PC-9 (cell line): ENCODE measurements at regions of chr1 and their contacts with region 1.

Region 1: GRCh38 chr1:197915862-197916499 is 1.2 kb upstream of the LHX9 start:
- DNase-seq: peak; percentile 63 to 64
- H3K4me3 ChIP-seq: peak overlapping the region; percentile 78
- H3K27ac ChIP-seq: no peak overlapping the region
- H3K4me1 ChIP-seq: peaks cover 14% of the 10 kb centered on the region
- H3K27me3 ChIP-seq: peaks cover 13% of the 10 kb centered on the region; the same call in 1 of the 2 replicates
- CTCF ChIP-seq: peak; percentile 76

Region 2: DNA sequence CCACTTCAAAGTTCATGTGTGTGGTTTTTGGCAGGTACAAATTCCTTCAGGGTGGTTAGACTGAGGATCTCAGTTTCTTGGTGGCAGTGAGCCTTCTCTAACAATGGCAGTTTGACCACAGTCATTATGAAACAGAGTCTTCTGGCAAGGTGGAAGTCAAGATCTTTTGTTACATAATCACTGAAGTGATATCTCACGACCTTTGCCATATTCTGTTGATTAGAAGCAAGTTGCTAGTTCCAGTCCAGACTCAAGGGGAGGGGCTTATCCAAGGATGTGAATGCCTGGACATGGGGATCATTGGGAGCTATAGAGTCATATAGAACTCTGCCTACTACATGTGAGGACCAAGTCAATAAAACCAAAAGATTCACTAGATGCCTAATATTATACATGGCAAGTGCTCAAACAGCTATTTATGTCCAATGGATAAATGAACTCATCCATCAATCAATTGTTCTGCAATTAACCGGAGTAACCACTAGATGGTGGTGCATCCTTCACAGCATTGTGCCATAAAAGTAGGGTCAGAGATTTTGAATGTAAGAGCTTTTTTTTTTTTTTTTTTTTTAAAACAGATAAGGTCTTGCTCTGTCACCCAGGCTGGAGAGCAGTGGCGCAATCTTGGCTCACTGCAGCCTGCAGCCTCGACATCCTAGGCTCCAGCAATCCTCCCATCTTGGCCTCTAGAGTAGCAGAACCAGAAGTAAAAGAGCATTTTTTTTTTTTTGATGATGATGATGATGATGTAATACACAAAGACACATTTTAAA is 516.0 kb before region 1 on chr1:
- CTCF ChIA-PET with region 1: interaction called, 3 read pairs
- POLR2A ChIA-PET with region 1: interaction called, 10 read pairs
- intact Hi-C with region 1: no loop called
- DNase-seq: peak; percentile 23 to 58
- H3K4me3 ChIP-seq: no peak overlapping the region
- H3K27ac ChIP-seq: no peak overlapping the region
- H3K4me1 ChIP-seq: no peaks in the 10 kb centered on the region
- H3K27me3 ChIP-seq: no peaks in the 10 kb centered on the region
- CTCF ChIP-seq: peak; percentile 71

Region 3: GRCh38 chr1:197692965-197693364 is 223.0 kb before region 1 on chr1:
- CTCF ChIA-PET with region 1: no interaction called
- POLR2A ChIA-PET with region 1: interaction called, 5 read pairs
- intact Hi-C with region 1: loop called (anchors 5 kb)
- DNase-seq: no peak
- H3K4me3 ChIP-seq: no peak overlapping the region
- H3K27ac ChIP-seq: no peak overlapping the region
- H3K4me1 ChIP-seq: peaks cover 11% of the 10 kb centered on the region
- H3K27me3 ChIP-seq: no peaks in the 10 kb centered on the region
- CTCF ChIP-seq: no peak; the same call in 1 of the 2 replicates

Region 4: GRCh38 chr1:197808880-197809279 is 107.1 kb before region 1 on chr1:
- CTCF ChIA-PET with region 1: no interaction called
- POLR2A ChIA-PET with region 1: no interaction called
- intact Hi-C with region 1: no loop called
- DNase-seq: no peak
- H3K4me3 ChIP-seq: no peak overlapping the region
- H3K27ac ChIP-seq: no peak overlapping the region
- H3K4me1 ChIP-seq: no peaks in the 10 kb centered on the region
- H3K27me3 ChIP-seq: peaks cover 4% of the 10 kb centered on the region; the same call in 1 of the 2 replicates
- CTCF ChIP-seq: no peak

Region 5: DNA sequence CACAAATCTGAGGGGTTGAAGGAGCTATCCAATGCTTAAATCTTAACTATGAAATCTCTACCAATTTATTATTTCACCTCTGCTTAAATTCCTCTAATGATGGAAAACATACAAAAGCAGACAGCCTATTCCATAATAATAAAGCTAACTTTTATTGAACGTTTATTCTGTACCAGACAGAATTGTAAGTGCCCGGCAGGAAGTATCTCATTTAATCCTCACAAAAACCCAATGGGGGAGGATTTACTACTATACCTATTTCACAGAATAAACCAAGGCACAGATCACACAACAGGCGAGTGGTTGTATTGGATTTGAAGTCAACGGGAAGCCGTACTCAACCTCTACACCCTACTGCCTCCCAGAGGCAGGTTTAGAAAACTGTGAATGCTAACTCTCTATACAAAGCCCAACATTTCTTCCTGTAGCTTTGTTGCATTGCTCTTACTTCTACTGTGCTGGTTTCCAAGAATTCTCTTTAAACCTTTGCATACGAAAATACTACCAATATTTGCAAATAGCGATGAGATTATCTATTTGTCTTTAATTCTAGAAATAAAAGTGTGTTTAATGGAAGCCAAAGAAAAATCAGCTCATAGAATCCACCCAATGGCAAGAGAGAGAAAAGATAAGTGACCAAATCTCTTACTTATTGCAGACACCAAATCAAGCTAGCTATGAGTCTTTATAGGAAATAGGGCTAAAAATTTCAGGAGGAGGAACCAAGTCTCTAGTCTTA is 47.1 kb before region 1 on chr1:
- CTCF ChIA-PET with region 1: interaction called, 10 read pairs
- POLR2A ChIA-PET with region 1: no interaction called
- intact Hi-C with region 1: no loop called
- DNase-seq: peak; percentile 1 to 38
- H3K4me3 ChIP-seq: no peak overlapping the region
- H3K27ac ChIP-seq: no peak overlapping the region
- H3K4me1 ChIP-seq: no peaks in the 10 kb centered on the region
- H3K27me3 ChIP-seq: no peaks in the 10 kb centered on the region
- CTCF ChIP-seq: peak; percentile 72

Region 6: DNA sequence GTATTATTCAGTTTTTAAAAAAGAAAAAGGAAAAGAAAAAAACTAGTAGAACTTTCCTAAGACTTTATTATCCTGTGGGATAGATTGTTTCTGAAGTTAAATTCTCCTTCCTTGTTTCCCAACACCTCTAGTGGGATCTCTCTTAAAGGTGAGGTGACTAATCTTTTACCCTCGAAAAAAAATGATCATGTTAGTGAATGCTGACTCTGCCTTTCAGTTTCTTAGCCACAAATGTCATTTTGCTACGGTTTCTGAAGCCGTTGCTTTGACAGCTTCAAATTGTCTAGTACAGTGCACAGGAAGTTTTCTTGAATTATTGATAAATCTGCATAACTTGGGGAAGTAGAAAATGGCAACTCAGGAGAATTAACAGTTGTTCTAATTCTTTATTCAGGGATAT is 227.8 kb after region 1 on chr1:
- CTCF ChIA-PET with region 1: no interaction called
- POLR2A ChIA-PET with region 1: no interaction called
- intact Hi-C with region 1: no loop called
- DNase-seq: no peak
- H3K4me3 ChIP-seq: no peak overlapping the region
- H3K27ac ChIP-seq: no peak overlapping the region
- H3K4me1 ChIP-seq: no peaks in the 10 kb centered on the region
- H3K27me3 ChIP-seq: no peaks in the 10 kb centered on the region
- CTCF ChIP-seq: no peak

Region 7: GRCh38 chr1:198275597-198275996 is 359.6 kb after region 1 on chr1:
- CTCF ChIA-PET with region 1: no interaction called
- POLR2A ChIA-PET with region 1: no interaction called
- intact Hi-C with region 1: loop called (anchors 10 kb)
- DNase-seq: no peak
- H3K4me3 ChIP-seq: no peak overlapping the region
- H3K27ac ChIP-seq: no peak overlapping the region
- H3K4me1 ChIP-seq: no peaks in the 10 kb centered on the region
- H3K27me3 ChIP-seq: no peaks in the 10 kb centered on the region
- CTCF ChIP-seq: no peak

Region 8: DNA sequence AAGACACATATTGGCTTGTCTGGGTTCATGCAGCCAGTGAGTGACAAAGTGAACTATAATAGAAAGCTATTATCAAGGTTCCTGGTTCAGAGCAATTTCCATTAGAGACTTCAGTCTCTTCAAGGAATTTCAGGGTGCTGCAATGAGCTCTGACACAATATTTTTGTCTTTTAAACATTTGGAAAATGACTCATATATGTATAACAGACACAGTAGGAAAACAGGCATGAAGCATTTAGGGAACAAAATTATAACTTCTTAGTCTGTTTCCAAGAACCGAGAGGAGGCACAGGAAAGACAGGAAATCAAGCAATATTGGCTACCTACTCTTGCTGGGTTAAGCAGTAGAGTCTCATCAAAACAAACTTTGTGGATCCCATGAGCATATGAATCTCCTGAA is 893.3 kb after region 1 on chr1:
- CTCF ChIA-PET with region 1: interaction called, 16 read pairs
- POLR2A ChIA-PET with region 1: no interaction called
- intact Hi-C with region 1: no loop called
- DNase-seq: no peak
- H3K4me3 ChIP-seq: no peak overlapping the region
- H3K27ac ChIP-seq: no peak overlapping the region
- H3K4me1 ChIP-seq: no peaks in the 10 kb centered on the region
- H3K27me3 ChIP-seq: no peaks in the 10 kb centered on the region
- CTCF ChIP-seq: no peak